SK-N-SH (cell line): ENCODE measurements at regions of chr5 and their contacts with region 1.

Region 1: DNA sequence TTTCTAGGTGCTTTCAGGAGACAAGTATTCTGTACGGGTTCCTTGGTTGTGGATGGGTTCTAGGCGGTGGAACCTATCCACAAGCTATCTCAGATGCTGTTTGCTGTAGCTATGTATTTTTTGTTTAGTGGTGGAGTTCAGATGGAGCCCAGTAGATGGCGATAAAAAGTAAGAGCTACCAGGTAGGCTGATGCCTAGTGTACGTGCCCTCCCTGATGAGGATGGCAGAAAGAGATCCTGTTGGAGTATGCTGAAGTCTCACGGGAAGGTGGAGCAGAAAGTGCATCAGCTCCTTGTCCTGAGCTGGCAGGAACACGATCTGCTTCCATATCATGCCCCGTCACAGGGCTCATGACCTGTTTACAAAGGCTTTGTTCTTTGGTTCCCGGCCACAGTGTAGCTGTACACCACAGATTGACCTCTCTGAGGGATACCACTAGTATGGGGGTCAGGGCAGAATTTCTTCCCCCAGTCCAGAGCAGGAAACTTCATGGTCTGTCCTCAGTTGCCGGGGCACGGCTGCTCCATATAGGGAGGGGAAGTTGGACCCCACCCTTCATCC is 12.6 kb upstream of the UGT3A2 start:
- DNase-seq: peak; percentile 75
- H3K4me3 ChIP-seq: no peak overlapping the region
- H3K27ac ChIP-seq: no peak overlapping the region
- H3K4me1 ChIP-seq: peaks cover 0 to 4% of the 10 kb centered on the region in 2 experiments; a peak in 2 of 4 replicates
- H3K27me3 ChIP-seq: no peaks in the 10 kb centered on the region; the same call in 1 of the 2 replicates
- CTCF ChIP-seq: peak; percentile 70
- EP300 ChIP-seq: no peak
- RAD21 ChIP-seq: peak; percentile 80

Region 2: DNA sequence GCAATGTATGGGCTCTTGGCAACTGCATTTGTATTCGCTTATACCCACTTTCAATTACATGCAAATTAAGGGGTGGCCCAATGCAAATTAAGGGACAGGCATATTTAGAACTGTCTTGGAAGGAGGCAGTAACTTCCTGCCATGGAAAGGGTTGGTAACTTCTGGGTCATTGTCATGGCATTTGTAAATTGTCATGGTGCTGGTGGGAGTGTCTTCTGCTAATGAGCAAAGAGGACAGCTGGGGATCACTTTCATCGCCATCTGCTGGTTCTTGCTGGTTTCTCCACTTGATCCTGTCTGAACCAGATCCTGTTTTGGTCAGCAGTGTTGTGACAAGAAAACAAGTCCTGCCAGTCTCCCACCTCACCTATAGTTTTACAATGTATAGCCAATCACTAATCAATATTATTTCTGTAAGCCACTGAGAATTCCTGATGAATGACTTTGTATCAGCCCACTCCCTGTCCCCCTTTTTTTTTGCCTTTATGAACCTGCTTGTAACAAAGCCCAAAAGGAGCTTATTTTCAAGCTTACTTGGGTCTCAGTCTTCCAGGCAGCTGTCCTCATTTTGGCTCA is 10.8 kb after region 1 on chr5:
- CTCF ChIA-PET with region 1: interaction called, 29 read pairs
- POLR2A ChIA-PET with region 1: no interaction called
- DNase-seq: peak; percentile 4
- H3K4me3 ChIP-seq: no peak overlapping the region
- H3K27ac ChIP-seq: no peak overlapping the region
- H3K4me1 ChIP-seq: no peaks in the 10 kb centered on the region
- H3K27me3 ChIP-seq: no peaks in the 10 kb centered on the region
- CTCF ChIP-seq: peak; percentile 44
- EP300 ChIP-seq: no peak
- RAD21 ChIP-seq: peak; percentile 26; the same call in 1 of the 2 replicates

Region 3: GRCh38 chr5:36151434-36152323 is 72.4 kb after region 1 on chr5 and contains the starts of genes LMBRD2 and SKP2:
- CTCF ChIA-PET with region 1: interaction called, 21 read pairs
- POLR2A ChIA-PET with region 1: no interaction called
- DNase-seq: peak; percentile 95
- H3K4me3 ChIP-seq: peak within 1 kb of the TSS; percentile 84 to 99
- H3K27ac ChIP-seq: peak within 1 kb of the TSS; percentile 42 to 89
- H3K4me1 ChIP-seq: peaks cover 30 to 31% of the 10 kb centered on the region in 2 experiments
- H3K27me3 ChIP-seq: no peaks in the 10 kb centered on the region
- CTCF ChIP-seq: no peak
- EP300 ChIP-seq: peak in 1 of 2 experiments; percentile 10; a peak in 1 of 4 replicates
- RAD21 ChIP-seq: peak; percentile 5; the same call in 1 of the 2 replicates
- polyA plus RNA-seq, gene LMBRD2: 1.6 and 2.2 TPM in 2 replicates
- polyA plus RNA-seq, gene SKP2: 12.4 and 14.8 TPM in 2 replicates

Region 4: DNA sequence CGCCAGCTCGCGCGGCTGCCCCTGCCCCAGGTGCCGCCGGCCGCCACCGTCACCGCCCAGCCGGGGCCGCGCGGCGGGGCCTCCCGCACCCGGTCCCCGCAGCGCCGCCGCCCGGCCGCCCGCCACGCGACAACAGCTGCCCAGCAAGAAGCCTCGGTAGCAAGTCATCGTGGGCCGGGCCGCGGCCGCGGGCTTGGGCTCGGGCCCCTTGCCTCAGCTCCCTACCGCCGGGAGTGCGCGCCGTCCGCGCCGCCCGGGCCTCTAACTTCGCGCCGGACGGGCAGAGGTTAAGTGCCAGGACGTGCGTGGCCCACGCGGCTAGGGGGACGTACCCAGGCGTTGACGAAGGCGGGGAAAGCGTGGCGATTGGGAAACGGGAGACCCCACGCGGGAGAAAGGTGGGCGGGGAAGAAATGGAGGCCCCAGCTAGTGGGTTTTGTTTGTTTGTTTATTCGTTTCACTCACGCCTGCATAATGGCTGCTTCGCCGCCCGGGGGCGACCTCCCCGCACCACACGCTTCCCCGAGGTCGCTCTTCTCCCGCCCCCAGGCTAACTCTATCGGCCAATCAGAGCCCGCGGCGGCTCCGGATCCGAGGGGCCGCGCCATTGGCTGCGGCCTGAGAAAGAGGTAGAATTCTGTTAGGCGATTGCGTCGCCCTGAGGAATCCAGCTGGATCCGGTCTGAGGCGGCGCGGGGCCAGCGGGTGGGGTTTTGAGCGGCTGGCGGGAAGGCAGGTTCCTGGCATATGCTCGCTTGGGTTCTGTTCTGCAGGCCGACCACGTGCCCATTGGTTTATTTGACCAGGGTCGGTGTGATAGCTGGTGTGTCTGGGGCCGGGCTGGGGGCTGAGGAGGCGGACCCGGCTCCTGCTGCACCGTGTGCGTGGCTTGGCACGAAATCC is 162.6 kb after region 1 on chr5 and contains the start of gene NADK2:
- CTCF ChIA-PET with region 1: interaction called, 12 read pairs
- POLR2A ChIA-PET with region 1: no interaction called
- DNase-seq: peak; percentile 92
- H3K4me3 ChIP-seq: peak within 1 kb of the TSS; percentile 87 to 89
- H3K27ac ChIP-seq: peak within 1 kb of the TSS; percentile 90 to 92
- H3K4me1 ChIP-seq: peaks cover 21 to 28% of the 10 kb centered on the region in 2 experiments
- H3K27me3 ChIP-seq: no peaks in the 10 kb centered on the region
- CTCF ChIP-seq: peak; percentile 64
- EP300 ChIP-seq: peak in 1 of 2 experiments; percentile 49; a peak in 2 of 4 replicates
- RAD21 ChIP-seq: peak; percentile 35; the same call in 1 of the 2 replicates
- polyA plus RNA-seq, gene NADK2: 7.6 and 9.7 TPM in 2 replicates

Region 5: GRCh38 chr5:36305571-36306326 is 226.5 kb after region 1 on chr5:
- CTCF ChIA-PET with region 1: interaction called, 26 read pairs
- POLR2A ChIA-PET with region 1: no interaction called
- DNase-seq: peak; percentile 42
- H3K4me3 ChIP-seq: no peak overlapping the region
- H3K27ac ChIP-seq: no peak overlapping the region
- H3K4me1 ChIP-seq: no peaks in the 10 kb centered on the region; a peak in 2 of 4 replicates
- H3K27me3 ChIP-seq: no peaks in the 10 kb centered on the region; the same call in 1 of the 2 replicates
- CTCF ChIP-seq: peak; percentile 83
- EP300 ChIP-seq: no peak
- RAD21 ChIP-seq: peak; percentile 91